ENCODE measurements at regions of chr21 and their contacts with region 1.

Region 1: GRCh38 chr21:32403201-32403777 is 9.2 kb upstream of the EVA1C start:
- DNase-seq: peak in 30 of 35 experiments; percentile 11 to 81 (median 40)
- ATAC-seq: peak; percentile 78 to 83 (median 80)
- H3K4me3 ChIP-seq: no peak overlapping the region
- H3K4me3 Mint-ChIP-seq: no peak overlapping the region
- H3K27ac ChIP-seq: no peak overlapping the region
- H3K27ac Mint-ChIP-seq: peak overlapping the region in 1 of 2 donors; percentile 52
- H3K4me1 ChIP-seq: peaks cover 0 to 20% of the 10 kb centered on the region in 2 experiments
- H3K4me1 Mint-ChIP-seq: peaks cover 11 to 17% (median 14%) of the 10 kb centered on the region in 3 donors
- H3K27me3 ChIP-seq: peaks cover 0 to 6% of the 10 kb centered on the region in 2 experiments
- H3K27me3 Mint-ChIP-seq: peaks cover 11 to 15% of the 10 kb centered on the region in 2 donors

Region 2: GRCh38 chr21:32044205-32045180 is 358.8 kb before region 1 on chr21:
- CTCF ChIA-PET with region 1: interaction called in 1 of 2 experiments, 12 read pairs
- POLR2A ChIA-PET with region 1: no interaction called
- DNase-seq: no peak
- ATAC-seq: no peak
- H3K4me3 ChIP-seq: no peak overlapping the region
- H3K4me3 Mint-ChIP-seq: no peak overlapping the region
- H3K27ac ChIP-seq: no peak overlapping the region
- H3K27ac Mint-ChIP-seq: no peak overlapping the region
- H3K4me1 ChIP-seq: no peaks in the 10 kb centered on the region
- H3K4me1 Mint-ChIP-seq: no peaks in the 10 kb centered on the region
- H3K27me3 ChIP-seq: peaks cover 0 to 2% of the 10 kb centered on the region in 2 experiments
- H3K27me3 Mint-ChIP-seq: peaks cover 12 to 20% of the 10 kb centered on the region in 2 donors

Region 3: DNA sequence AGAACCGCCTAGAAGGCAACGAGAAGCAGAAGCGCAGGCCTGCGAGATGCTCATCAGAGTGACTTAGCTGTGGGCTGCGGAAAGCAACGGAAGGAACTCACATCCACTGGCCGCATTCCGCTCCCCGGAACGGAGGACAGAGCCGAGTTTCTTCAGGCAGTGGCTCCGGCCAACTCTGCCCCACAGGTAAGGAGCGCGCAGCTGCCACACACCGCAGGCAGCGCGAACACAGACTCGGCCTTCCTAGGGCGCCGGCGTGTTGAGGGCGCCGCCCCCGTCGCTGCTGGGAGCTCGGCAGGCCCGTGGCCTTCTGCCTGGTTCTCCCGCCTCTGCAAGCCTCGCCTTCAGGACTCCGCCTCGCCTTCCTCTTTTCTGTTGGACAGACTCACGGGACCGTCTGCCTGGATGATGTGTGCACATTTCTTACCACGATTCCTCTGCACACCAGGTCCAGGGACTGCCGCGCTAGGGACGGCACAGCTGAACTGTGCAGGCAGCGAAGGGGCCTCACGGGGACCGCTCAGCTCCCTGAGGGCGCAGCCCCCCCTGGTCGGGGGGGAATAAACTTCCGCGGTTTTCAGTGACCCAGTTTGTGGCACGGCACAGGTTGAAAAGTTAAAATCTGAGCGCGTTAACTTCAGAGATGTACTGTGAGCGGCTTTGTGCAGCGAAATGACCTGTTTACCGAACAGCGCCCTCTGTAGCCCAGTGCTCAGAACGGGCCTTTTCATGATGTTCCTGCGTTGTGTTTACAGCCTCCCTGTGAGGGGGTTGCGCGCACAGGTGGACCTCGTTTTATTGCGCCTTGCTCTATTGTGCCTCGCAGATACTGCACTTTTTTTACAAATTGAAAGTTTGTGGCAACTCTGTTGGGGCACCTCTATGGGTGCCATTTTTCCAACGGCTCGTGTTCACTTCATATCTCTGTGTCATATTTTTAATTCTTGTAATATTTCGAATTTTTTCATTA is 166.3 kb after region 1 on chr21:
- CTCF ChIA-PET with region 1: interaction called, 4 to 24 read pairs
- POLR2A ChIA-PET with region 1: interaction called in 1 of 2 experiments, 3 read pairs
- DNase-seq: peak; percentile 59 to 93 (median 78)
- ATAC-seq: peak; percentile 84 to 91 (median 88)
- H3K4me3 ChIP-seq: peak overlapping the region; percentile 71 to 74
- H3K4me3 Mint-ChIP-seq: peak overlapping the region; percentile 88 to 96 (median 95)
- H3K27ac ChIP-seq: peak overlapping the region; percentile 64
- H3K27ac Mint-ChIP-seq: peak overlapping the region; percentile 94 to 96
- H3K4me1 ChIP-seq: peaks cover 0 to 14% of the 10 kb centered on the region in 2 experiments
- H3K4me1 Mint-ChIP-seq: peaks cover 12 to 22% (median 21%) of the 10 kb centered on the region in 3 donors
- H3K27me3 ChIP-seq: peaks cover 0 to 10% of the 10 kb centered on the region in 2 experiments
- H3K27me3 Mint-ChIP-seq: no peaks in the 10 kb centered on the region

Region 4: DNA sequence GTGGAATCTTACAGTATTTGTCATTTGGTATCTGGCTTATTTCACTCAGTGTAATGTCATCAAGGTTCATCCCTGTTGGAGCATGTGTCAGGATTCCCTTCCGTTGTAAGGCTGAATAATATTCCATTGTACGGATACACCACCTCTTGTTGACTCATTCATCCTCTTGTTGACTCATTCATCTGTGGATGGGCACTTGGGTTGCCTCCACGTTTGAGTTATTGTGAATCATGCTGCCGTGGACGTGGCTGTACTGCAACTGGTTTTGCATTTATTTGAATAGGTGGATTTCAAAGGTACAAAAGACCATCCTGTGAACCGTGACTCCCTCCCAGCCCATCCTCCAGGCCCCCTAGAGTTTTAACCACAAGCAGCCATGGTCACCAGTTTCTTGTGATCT is 193.9 kb after region 1 on chr21:
- CTCF ChIA-PET with region 1: interaction called, 15 to 61 read pairs
- POLR2A ChIA-PET with region 1: no interaction called
- DNase-seq: no peak
- ATAC-seq: no peak
- H3K4me3 ChIP-seq: no peak overlapping the region
- H3K4me3 Mint-ChIP-seq: no peak overlapping the region
- H3K27ac ChIP-seq: no peak overlapping the region
- H3K27ac Mint-ChIP-seq: peak overlapping the region in 1 of 2 donors; percentile 68
- H3K4me1 ChIP-seq: no peaks in the 10 kb centered on the region
- H3K4me1 Mint-ChIP-seq: no peaks in the 10 kb centered on the region
- H3K27me3 ChIP-seq: no peaks in the 10 kb centered on the region
- H3K27me3 Mint-ChIP-seq: no peaks in the 10 kb centered on the region

Region 5: DNA sequence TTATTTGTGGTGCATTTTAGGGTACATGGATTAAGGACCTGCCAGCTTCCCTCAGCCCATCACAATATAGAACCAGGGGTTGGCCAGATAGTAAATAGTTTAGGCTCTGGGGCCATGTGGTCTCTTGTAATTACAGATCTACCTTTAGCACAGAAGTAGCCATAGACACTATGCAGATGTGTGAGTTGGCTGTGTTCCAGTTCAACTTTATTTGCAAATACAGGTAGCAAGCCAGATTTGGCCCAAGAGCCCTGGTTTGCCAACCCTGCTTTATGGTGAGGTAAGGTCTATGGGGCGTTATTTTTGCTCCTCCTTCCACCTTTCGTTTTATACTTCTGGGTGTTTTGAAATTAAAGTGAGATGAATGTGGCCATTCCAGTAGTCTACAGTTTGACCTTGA is 1718.8 kb after region 1 on chr21:
- CTCF ChIA-PET with region 1: interaction called in 1 of 2 experiments, 10 read pairs
- POLR2A ChIA-PET with region 1: no interaction called
- DNase-seq: no peak
- ATAC-seq: no peak
- H3K4me3 ChIP-seq: no peak overlapping the region
- H3K4me3 Mint-ChIP-seq: no peak overlapping the region
- H3K27ac ChIP-seq: no peak overlapping the region
- H3K27ac Mint-ChIP-seq: no peak overlapping the region
- H3K4me1 ChIP-seq: peaks cover 6% of the 10 kb centered on the region in 2 experiments
- H3K4me1 Mint-ChIP-seq: peaks cover 64 to 82% (median 75%) of the 10 kb centered on the region in 3 donors
- H3K27me3 ChIP-seq: no peaks in the 10 kb centered on the region
- H3K27me3 Mint-ChIP-seq: no peaks in the 10 kb centered on the region

Measured in T-cell (primary cell).